Activated CD4-positive, alpha-beta T cell treated with anti-CD3 and anti-CD28 coated beads for 36 hours (primary cell): ENCODE measurements at regions of chr9 and their contacts with region 1.

Region 1: DNA sequence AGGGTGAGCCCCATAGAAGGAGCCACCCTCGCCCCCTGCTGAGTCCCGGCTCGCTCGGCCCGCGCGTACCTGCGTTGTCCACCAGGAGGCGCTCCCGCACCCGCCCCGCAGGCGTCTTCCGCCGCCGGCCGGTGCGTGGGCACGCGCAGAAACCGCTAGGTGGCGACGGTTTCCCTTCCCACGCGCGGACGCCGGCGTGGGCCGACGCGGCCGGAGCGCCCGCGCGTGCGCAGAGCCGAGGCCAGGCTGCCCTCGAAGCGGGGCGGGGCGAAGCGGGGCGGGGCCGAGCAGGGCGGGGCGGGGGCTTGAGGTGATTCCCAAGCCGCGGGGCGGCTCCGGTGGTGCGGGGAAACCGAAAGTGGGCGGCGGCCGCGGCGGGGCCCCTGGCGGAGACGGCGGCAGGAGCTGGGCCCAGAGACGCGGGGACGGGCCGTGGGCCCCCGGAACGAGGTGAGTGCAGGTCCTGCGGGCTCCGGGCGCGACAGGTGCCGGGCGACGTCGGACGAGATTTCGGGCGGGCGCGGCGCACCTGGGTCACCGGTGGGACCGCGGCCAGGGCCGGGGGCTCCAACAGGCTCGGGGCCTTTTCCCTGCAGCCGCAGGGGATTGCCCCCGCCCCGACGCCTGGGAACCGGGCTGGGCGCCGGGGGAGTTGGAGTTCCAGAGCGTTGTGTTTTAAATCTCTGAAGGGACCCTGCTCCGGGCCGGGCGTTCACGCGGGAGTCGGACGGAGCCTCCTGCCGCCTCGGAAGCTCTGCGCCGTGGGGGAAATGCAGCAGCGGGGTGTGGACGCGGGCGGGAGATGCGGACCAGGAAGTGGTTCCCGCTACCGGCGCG is at the start of gene TDRD7:
- DNase-seq: peak; percentile 94
- ATAC-seq: peak; percentile 91
- H3K4me3 Mint-ChIP-seq: peak within 1 kb of the TSS; percentile 74
- H3K27ac Mint-ChIP-seq: peak within 1 kb of the TSS; percentile 58
- H3K4me1 Mint-ChIP-seq: peaks cover 22% of the 10 kb centered on the region
- H3K27me3 Mint-ChIP-seq: peaks cover 16% of the 10 kb centered on the region
- total RNA-seq, gene TDRD7: 9.3 TPM

Region 2: GRCh38 chr9:96777426-96777864 is 634.6 kb before region 1 on chr9:
- CTCF ChIA-PET with region 1: no interaction called
- POLR2A ChIA-PET with region 1: no interaction called
- intact Hi-C with region 1: loop called in 1 of 2 experiments (anchors 5 kb)
- DNase-seq: no peak
- ATAC-seq: no peak
- H3K4me3 Mint-ChIP-seq: peak overlapping the region; percentile 93
- H3K27ac Mint-ChIP-seq: peak overlapping the region; percentile 95
- H3K4me1 Mint-ChIP-seq: peaks cover 24% of the 10 kb centered on the region
- H3K27me3 Mint-ChIP-seq: no peaks in the 10 kb centered on the region

Region 3: GRCh38 chr9:97315550-97315949 is 96.5 kb before region 1 on chr9:
- CTCF ChIA-PET with region 1: no interaction called
- POLR2A ChIA-PET with region 1: no interaction called
- intact Hi-C with region 1: no loop called
- DNase-seq: no peak
- ATAC-seq: no peak
- H3K4me3 Mint-ChIP-seq: no peak overlapping the region
- H3K27ac Mint-ChIP-seq: no peak overlapping the region
- H3K4me1 Mint-ChIP-seq: peaks cover 4% of the 10 kb centered on the region
- H3K27me3 Mint-ChIP-seq: no peaks in the 10 kb centered on the region

Region 4: GRCh38 chr9:97386733-97387503 is 25.1 kb before region 1 on chr9:
- CTCF ChIA-PET with region 1: interaction called, 8 read pairs
- POLR2A ChIA-PET with region 1: no interaction called
- intact Hi-C with region 1: loop called in 1 of 2 experiments (anchors 1 kb)
- DNase-seq: peak; percentile 86
- ATAC-seq: peak; percentile 55
- H3K4me3 Mint-ChIP-seq: no peak overlapping the region
- H3K27ac Mint-ChIP-seq: no peak overlapping the region
- H3K4me1 Mint-ChIP-seq: peaks cover 14% of the 10 kb centered on the region
- H3K27me3 Mint-ChIP-seq: peaks cover 16% of the 10 kb centered on the region

Region 5: GRCh38 chr9:97501177-97501971 is 89.4 kb after region 1 on chr9 and contains the start of gene TMOD1:
- CTCF ChIA-PET with region 1: no interaction called
- POLR2A ChIA-PET with region 1: no interaction called
- intact Hi-C with region 1: loop called in 1 of 2 experiments (anchors 2 kb)
- DNase-seq: peak; percentile 66
- ATAC-seq: peak; percentile 67
- H3K4me3 Mint-ChIP-seq: peak within 1 kb of the TSS; percentile 64
- H3K27ac Mint-ChIP-seq: no peak within 1 kb of the TSS
- H3K4me1 Mint-ChIP-seq: peaks cover 15% of the 10 kb centered on the region
- H3K27me3 Mint-ChIP-seq: peaks cover 45% of the 10 kb centered on the region
- total RNA-seq, gene TMOD1: 1.3 to 1.5 TPM

Region 6: GRCh38 chr9:97598461-97599288 is 186.7 kb after region 1 on chr9:
- CTCF ChIA-PET with region 1: interaction called, 23 read pairs
- POLR2A ChIA-PET with region 1: no interaction called
- intact Hi-C with region 1: loop called (anchors 1 to 5 kb)
- DNase-seq: peak; percentile 85
- ATAC-seq: peak; percentile 99
- H3K4me3 Mint-ChIP-seq: no peak overlapping the region
- H3K27ac Mint-ChIP-seq: peak overlapping the region; percentile 66
- H3K4me1 Mint-ChIP-seq: peaks cover 7% of the 10 kb centered on the region
- H3K27me3 Mint-ChIP-seq: no peaks in the 10 kb centered on the region

Region 7: GRCh38 chr9:97696803-97697601 is 285.0 kb after region 1 on chr9 and contains the start of gene XPA:
- CTCF ChIA-PET with region 1: interaction called, 3 read pairs
- POLR2A ChIA-PET with region 1: no interaction called
- intact Hi-C with region 1: loop called in 1 of 2 experiments (anchors 2 kb)
- DNase-seq: peak; percentile 98
- ATAC-seq: peak; percentile 95
- H3K4me3 Mint-ChIP-seq: peak within 1 kb of the TSS; percentile 81
- H3K27ac Mint-ChIP-seq: peak within 1 kb of the TSS; percentile 92
- H3K4me1 Mint-ChIP-seq: peaks cover 45% of the 10 kb centered on the region
- H3K27me3 Mint-ChIP-seq: peaks cover 2% of the 10 kb centered on the region
- total RNA-seq, gene XPA: 8.7 to 11.1 TPM